OCI-LY7 (cell line): ENCODE measurements at regions of chr9 and their contacts with region 1.

Region 1: GRCh38 chr9:638152-638551 is 203.3 kb upstream of the DMRT1 start:
- DNase-seq: no peak
- H3K4me3 ChIP-seq: no peak overlapping the region
- H3K27ac ChIP-seq: no peak overlapping the region
- H3K4me1 ChIP-seq: peaks cover 17% of the 10 kb centered on the region
- CTCF ChIP-seq: no peak

Region 2: GRCh38 chr9:626596-626995 is 11.6 kb before region 1 on chr9:
- CTCF ChIA-PET with region 1: no interaction called
- POLR2A ChIA-PET with region 1: interaction called, 10 read pairs
- intact Hi-C with region 1: no loop called
- DNase-seq: no peak
- H3K4me3 ChIP-seq: no peak overlapping the region
- H3K27ac ChIP-seq: no peak overlapping the region
- H3K4me1 ChIP-seq: peaks cover 28% of the 10 kb centered on the region
- CTCF ChIP-seq: no peak